GM12878 (cell line): ENCODE measurements at regions of chr6 and their contacts with region 1.

Region 1: GRCh38 chr6:41735427-41736356 is at the start of gene TFEB:
- DNase-seq: no peak
- ATAC-seq: peak; percentile 19
- H3K4me3 ChIP-seq: peak within 1 kb of the TSS; percentile 92
- H3K27ac ChIP-seq: peak within 1 kb of the TSS; percentile 98
- H3K4me1 ChIP-seq: peaks cover 1% of the 10 kb centered on the region
- H3K27me3 ChIP-seq: no peaks in the 10 kb centered on the region; a peak in 1 of 4 replicates
- CTCF ChIP-seq: peak; percentile 92 to 97 (median 95)
- EP300 ChIP-seq: no peak
- POLR2A ChIP-seq: no peak; the same call in 1 of the 2 replicates
- RAD21 ChIP-seq: peak; percentile 57
- polyA plus RNA-seq, gene TFEB: 0.84 to 2.6 TPM

Region 2: DNA sequence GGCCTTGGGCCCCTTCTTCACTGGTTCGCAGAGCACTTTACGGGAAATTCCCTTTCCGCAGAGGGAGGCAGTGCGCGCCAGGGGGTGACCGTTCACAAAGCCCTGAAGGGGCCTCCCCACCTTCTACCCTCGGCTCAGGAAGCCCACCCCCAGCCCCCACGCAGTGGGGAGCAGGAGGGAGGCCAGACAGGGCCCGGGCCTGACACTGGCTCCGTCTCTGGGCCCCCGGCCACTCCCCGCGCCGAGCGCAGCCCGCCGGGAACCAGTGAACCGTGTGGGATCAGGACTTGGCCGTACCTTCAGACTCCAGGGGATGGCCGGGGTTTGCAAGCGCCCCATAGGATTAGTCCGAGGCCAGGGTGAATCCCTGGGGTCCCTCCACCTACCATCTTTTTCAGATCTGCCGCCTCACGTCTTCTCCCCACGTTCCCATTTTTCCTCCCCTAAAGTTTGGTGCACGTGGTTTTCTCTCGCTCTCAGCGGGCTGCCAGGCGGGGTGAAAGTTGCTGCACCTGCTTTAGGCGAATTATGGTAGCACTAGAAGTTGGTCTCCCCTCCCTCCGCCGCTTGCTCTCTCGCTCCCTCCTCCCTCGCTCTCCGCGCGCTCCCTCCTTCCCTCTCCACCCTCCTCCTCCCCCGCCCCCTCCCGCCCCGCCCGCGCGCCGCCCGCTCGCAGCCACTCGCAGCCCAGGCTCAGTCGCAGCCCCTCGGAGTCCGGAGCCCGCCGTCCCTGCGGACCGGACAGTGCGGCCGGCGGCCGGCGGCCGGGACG is 189.8 kb before region 1 on chr6 and contains the start of gene FOXP4:
- CTCF ChIA-PET with region 1: no interaction called
- POLR2A ChIA-PET with region 1: no interaction called
- RAD21 ChIA-PET with region 1: no interaction called
- SMC1A ChIA-PET with region 1: no interaction called
- in situ Hi-C with region 1: no loop called
- intact Hi-C with region 1: loop called (anchors 5 kb)
- DNase-seq: peak; percentile 73
- ATAC-seq: peak; percentile 85
- H3K4me3 ChIP-seq: peak within 1 kb of the TSS; percentile 91
- H3K27ac ChIP-seq: peak within 1 kb of the TSS; percentile 74
- H3K4me1 ChIP-seq: peaks cover 16% of the 10 kb centered on the region
- H3K27me3 ChIP-seq: no peaks in the 10 kb centered on the region
- CTCF ChIP-seq: no peak
- EP300 ChIP-seq: no peak
- POLR2A ChIP-seq: peak; percentile 65
- RAD21 ChIP-seq: 0 out of 2 replicates have a peak, but pooled peaks have one; percentile 0
- polyA plus RNA-seq, gene FOXP4: 0.31 to 0.40 TPM

Region 3: DNA sequence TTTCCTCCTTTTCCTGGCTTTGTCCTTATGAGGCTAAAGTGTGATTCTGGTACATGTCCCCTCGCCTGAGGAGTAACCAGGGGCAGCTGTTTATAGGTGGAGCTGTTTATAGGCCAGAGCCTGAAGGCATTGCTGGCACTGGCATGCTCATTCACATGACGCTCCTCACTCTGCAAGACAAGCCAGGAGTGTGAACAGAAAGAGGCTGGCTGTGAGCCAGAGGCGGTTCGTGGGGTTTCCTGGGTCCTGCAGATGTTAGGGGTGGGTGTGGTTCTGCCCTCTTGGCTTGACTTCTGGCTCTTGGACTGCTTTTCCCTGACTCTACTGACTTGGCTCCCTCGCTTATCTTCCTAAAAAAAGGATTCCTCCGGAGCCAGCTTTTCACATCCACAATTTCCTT is 110.2 kb before region 1 on chr6:
- CTCF ChIA-PET with region 1: no interaction called
- POLR2A ChIA-PET with region 1: no interaction called
- RAD21 ChIA-PET with region 1: no interaction called
- SMC1A ChIA-PET with region 1: no interaction called
- in situ Hi-C with region 1: no loop called
- intact Hi-C with region 1: no loop called
- DNase-seq: no peak
- ATAC-seq: no peak
- H3K4me3 ChIP-seq: no peak overlapping the region
- H3K27ac ChIP-seq: no peak overlapping the region
- H3K4me1 ChIP-seq: peaks cover 6% of the 10 kb centered on the region
- H3K27me3 ChIP-seq: peaks cover 0 to 3% of the 10 kb centered on the region in 2 experiments; a peak in 2 of 4 replicates
- CTCF ChIP-seq: no peak
- EP300 ChIP-seq: no peak
- POLR2A ChIP-seq: no peak
- RAD21 ChIP-seq: no peak

Region 4: DNA sequence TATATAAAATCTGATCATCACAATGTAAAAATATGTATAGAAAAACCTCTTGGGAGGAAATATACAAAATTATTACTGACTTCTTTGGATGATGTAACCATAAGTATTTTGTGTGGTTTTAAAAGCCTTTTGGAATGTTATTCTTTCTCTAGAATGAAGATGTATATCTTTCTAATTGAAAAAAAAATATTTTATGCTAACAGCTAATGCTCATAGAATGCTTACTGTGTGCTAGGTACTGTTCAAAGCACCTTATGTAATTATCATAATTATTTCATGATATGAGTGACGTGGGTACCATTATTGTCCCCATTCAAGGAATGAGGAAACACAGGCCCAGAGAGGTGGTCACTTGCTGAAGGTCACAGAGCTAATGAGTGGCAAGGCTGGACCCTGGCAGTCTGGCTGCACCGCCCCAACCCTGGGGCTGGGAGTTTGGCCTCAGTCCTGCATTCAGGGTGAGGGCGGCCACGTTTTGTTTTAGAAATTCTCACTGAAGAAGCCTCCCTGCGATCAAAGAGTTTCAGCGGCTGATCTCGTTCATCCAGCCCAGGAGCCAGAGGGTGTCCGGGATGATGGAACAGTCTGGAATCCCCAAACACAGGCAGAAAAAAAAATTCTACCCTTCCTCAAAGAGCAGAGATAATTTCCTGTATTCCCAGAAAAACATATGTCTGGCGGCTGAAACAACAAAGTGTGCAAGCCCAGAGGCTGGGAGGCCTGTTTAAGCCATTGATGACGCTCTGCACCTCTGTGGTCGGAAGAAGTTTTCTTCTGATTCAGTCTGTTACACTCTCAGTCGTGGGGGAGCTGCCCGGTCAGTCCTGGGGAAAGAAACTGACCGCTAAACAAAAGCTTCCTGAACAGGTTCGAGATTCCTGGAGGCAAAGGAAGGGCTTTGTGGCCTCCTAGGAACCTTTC is 37.6 kb before region 1 on chr6:
- CTCF ChIA-PET with region 1: interaction called, 46 read pairs
- POLR2A ChIA-PET with region 1: interaction called, 3 read pairs
- RAD21 ChIA-PET with region 1: interaction called, 3 read pairs
- SMC1A ChIA-PET with region 1: interaction called, 3 read pairs
- in situ Hi-C with region 1: no loop called
- intact Hi-C with region 1: loop called (anchors 5 kb)
- DNase-seq: no peak
- ATAC-seq: no peak
- H3K4me3 ChIP-seq: no peak overlapping the region
- H3K27ac ChIP-seq: no peak overlapping the region
- H3K4me1 ChIP-seq: peaks cover 22% of the 10 kb centered on the region
- H3K27me3 ChIP-seq: no peaks in the 10 kb centered on the region
- CTCF ChIP-seq: no peak
- EP300 ChIP-seq: no peak
- POLR2A ChIP-seq: no peak
- RAD21 ChIP-seq: no peak

Region 5: GRCh38 chr6:41713161-41713649 is 22.5 kb before region 1 on chr6:
- CTCF ChIA-PET with region 1: interaction called, 42 read pairs
- POLR2A ChIA-PET with region 1: interaction called, 293 read pairs
- RAD21 ChIA-PET with region 1: interaction called, 300 read pairs
- SMC1A ChIA-PET with region 1: interaction called, 168 read pairs
- in situ Hi-C with region 1: no loop called
- intact Hi-C with region 1: no loop called
- DNase-seq: no peak
- ATAC-seq: no peak
- H3K4me3 ChIP-seq: no peak overlapping the region
- H3K27ac ChIP-seq: peak overlapping the region; percentile 84
- H3K4me1 ChIP-seq: peaks cover 63% of the 10 kb centered on the region
- H3K27me3 ChIP-seq: no peaks in the 10 kb centered on the region
- CTCF ChIP-seq: no peak
- EP300 ChIP-seq: no peak
- POLR2A ChIP-seq: no peak; the same call in 1 of the 2 replicates
- RAD21 ChIP-seq: no peak

Region 6: GRCh38 chr6:41779793-41780545 is 44.3 kb after region 1 on chr6 and contains the start of gene FRS3:
- CTCF ChIA-PET with region 1: interaction called, 5 read pairs
- POLR2A ChIA-PET with region 1: interaction called, 3 read pairs
- RAD21 ChIA-PET with region 1: interaction called, 5 read pairs
- SMC1A ChIA-PET with region 1: interaction called, 3 read pairs
- in situ Hi-C with region 1: no loop called
- intact Hi-C with region 1: loop called (anchors 2 kb)
- DNase-seq: peak; percentile 78
- ATAC-seq: peak; percentile 95
- H3K4me3 ChIP-seq: peak within 1 kb of the TSS; percentile 74
- H3K27ac ChIP-seq: no peak within 1 kb of the TSS
- H3K4me1 ChIP-seq: peaks cover 18% of the 10 kb centered on the region
- H3K27me3 ChIP-seq: no peaks in the 10 kb centered on the region
- CTCF ChIP-seq: peak; percentile 94 to 99 (median 97); a peak in 5 of 6 replicates
- EP300 ChIP-seq: 0 out of 4 replicates have a peak, but pooled peaks of 1 of the 2 experiments have one; percentile 30
- POLR2A ChIP-seq: no peak
- RAD21 ChIP-seq: peak; percentile 97
- polyA plus RNA-seq, gene FRS3: 0.05 to 0.09 TPM